A549 (cell line): ENCODE measurements at regions of chr10 and their contacts with region 1.

Region 1: GRCh38 chr10:102904346-102904745 is 13.7 kb upstream of the CNNM2 start:
- DNase-seq: no peak
- ATAC-seq: no peak
- H3K4me3 ChIP-seq: no peak overlapping the region
- H3K27ac ChIP-seq: no peak overlapping the region
- H3K4me1 ChIP-seq: no peaks in the 10 kb centered on the region
- CTCF ChIP-seq: no peak
- EP300 ChIP-seq: no peak
- POLR2A ChIP-seq: no peak
- RAD21 ChIP-seq: no peak

Region 2: GRCh38 chr10:102729029-102730026 is 175.0 kb before region 1 on chr10:
- CTCF ChIA-PET with region 1: interaction called, 13 read pairs
- POLR2A ChIA-PET with region 1: no interaction called
- DNase-seq: peak; percentile 76 to 90
- ATAC-seq: peak; percentile 97 to 99
- H3K4me3 ChIP-seq: no peak overlapping the region
- H3K27ac ChIP-seq: 0 out of 6 replicates have a peak overlapping the region, but pooled peaks of 1 of the 2 experiments have one; percentile 49
- H3K4me1 ChIP-seq: no peaks in the 10 kb centered on the region
- CTCF ChIP-seq: peak; percentile 85
- EP300 ChIP-seq: no peak
- POLR2A ChIP-seq: no peak
- RAD21 ChIP-seq: peak; percentile 85 to 93

Region 3: GRCh38 chr10:102752934-102753664 is 151.2 kb before region 1 on chr10:
- CTCF ChIA-PET with region 1: interaction called, 10 read pairs
- POLR2A ChIA-PET with region 1: interaction called, 4 read pairs
- DNase-seq: peak; percentile 46 to 64
- ATAC-seq: peak; percentile 98
- H3K4me3 ChIP-seq: no peak overlapping the region
- H3K27ac ChIP-seq: no peak overlapping the region
- H3K4me1 ChIP-seq: peaks cover 9% of the 10 kb centered on the region
- CTCF ChIP-seq: peak; percentile 58
- EP300 ChIP-seq: no peak
- POLR2A ChIP-seq: no peak
- RAD21 ChIP-seq: peak; percentile 44 to 55; a peak in 3 of 5 replicates

Region 4: GRCh38 chr10:102819060-102819459 is 85.3 kb before region 1 on chr10:
- CTCF ChIA-PET with region 1: interaction called, 10 read pairs
- POLR2A ChIA-PET with region 1: no interaction called
- DNase-seq: no peak
- ATAC-seq: no peak
- H3K4me3 ChIP-seq: no peak overlapping the region
- H3K27ac ChIP-seq: no peak overlapping the region
- H3K4me1 ChIP-seq: no peaks in the 10 kb centered on the region
- CTCF ChIP-seq: no peak
- EP300 ChIP-seq: no peak
- POLR2A ChIP-seq: no peak
- RAD21 ChIP-seq: no peak

Region 5: DNA sequence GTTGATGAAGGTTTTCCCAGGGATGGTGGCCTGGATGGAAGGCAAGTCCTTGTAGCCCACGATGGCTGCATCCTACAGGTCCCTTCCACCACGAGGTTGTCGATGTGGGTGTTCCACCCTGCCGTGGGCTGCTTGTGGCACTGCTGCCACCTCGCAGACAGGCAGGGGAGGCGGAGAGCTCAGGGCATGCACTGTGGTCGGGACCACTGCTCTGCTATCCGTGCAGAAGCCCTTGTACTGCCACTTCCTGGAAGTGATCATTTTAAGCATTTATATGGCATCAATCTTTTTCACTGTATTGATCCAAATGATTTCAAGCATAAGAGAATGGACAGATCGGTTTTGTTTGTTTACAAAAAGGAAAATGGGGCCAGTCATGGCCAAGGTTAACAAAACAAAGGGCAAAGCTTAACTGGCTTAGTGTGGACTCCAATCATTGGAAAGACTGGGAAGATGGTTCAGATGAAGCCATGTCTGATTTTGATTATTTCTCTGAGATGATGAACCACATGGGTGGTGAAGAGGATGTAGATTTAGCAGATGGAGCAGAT is 58.9 kb before region 1 on chr10:
- CTCF ChIA-PET with region 1: interaction called, 13 read pairs
- POLR2A ChIA-PET with region 1: no interaction called
- DNase-seq: no peak
- ATAC-seq: no peak
- H3K4me3 ChIP-seq: no peak overlapping the region
- H3K27ac ChIP-seq: no peak overlapping the region
- H3K4me1 ChIP-seq: no peaks in the 10 kb centered on the region
- CTCF ChIP-seq: no peak
- EP300 ChIP-seq: no peak
- POLR2A ChIP-seq: no peak
- RAD21 ChIP-seq: no peak